CD4-positive, alpha-beta memory T cell (primary cell): ENCODE measurements at regions of chr2 and their contacts with region 1.

Region 1: DNA sequence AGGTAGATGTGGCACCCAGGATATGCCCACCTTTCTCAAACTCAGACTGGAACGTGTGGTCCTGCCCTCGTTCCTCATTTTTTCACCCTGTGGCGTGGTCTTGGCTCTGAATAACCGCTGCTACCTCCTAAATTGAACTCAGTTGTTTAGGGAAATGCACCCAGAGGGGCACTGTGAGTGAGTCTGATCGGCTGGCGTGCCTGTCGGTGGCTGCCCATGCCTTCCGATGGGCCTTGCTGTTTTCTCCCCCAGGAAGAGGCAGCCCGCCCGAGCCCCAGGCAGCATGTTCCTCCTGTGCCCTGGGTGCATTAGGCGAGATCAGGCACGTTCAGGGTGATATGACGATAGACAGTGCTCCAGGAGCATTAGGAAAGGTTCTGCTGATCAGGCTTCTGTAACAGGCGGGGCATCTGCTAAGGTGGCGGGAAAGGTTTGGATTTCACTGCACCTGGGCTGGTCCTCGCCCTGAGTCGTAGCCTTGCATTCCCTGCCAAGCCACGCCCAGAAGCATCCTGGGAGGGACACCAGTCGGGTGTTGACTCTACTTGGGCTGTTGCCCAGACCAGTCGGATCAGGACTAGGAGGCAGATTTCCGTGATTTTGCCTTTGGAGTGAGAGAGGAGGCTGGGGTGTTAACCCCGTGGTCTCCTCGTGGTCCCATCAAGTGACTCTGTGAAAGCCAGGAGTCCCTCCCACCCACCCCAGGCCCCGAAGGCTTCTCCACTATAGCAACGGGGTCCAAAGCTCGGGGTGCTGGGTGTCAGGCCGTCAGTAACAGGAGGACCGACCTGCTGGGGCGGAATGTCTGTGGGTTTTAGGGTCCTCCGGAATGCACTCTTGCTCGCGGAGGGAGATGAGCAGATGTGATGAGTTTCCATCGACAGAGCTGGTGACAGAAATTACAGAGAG is 75.1 kb downstream of the SH3BP4 start:
- DNase-seq: peak in 1 of 5 donors; percentile 15
- H3K4me3 ChIP-seq: no peak overlapping the region
- H3K4me3 Mint-ChIP-seq: no peak overlapping the region
- H3K27ac ChIP-seq: no peak overlapping the region
- H3K27ac Mint-ChIP-seq: no peak overlapping the region
- H3K4me1 ChIP-seq: no peaks in the 10 kb centered on the region
- H3K4me1 Mint-ChIP-seq: no peaks in the 10 kb centered on the region
- H3K27me3 ChIP-seq: no peaks in the 10 kb centered on the region
- H3K27me3 Mint-ChIP-seq: peaks cover 0 to 14% of the 10 kb centered on the region in 2 donors

Region 2: GRCh38 chr2:235051436-235052265 is 24.7 kb after region 1 on chr2:
- CTCF ChIA-PET with region 1: no interaction called
- POLR2A ChIA-PET with region 1: no interaction called
- intact Hi-C with region 1: loop called (anchors 1 kb)
- DNase-seq: no peak
- H3K4me3 ChIP-seq: no peak overlapping the region
- H3K4me3 Mint-ChIP-seq: no peak overlapping the region
- H3K27ac ChIP-seq: no peak overlapping the region
- H3K27ac Mint-ChIP-seq: no peak overlapping the region
- H3K4me1 ChIP-seq: no peaks in the 10 kb centered on the region
- H3K4me1 Mint-ChIP-seq: peaks cover 0 to 2% (median under 1%) of the 10 kb centered on the region in 4 donors
- H3K27me3 ChIP-seq: no peaks in the 10 kb centered on the region
- H3K27me3 Mint-ChIP-seq: peaks cover 2 to 13% of the 10 kb centered on the region in 2 donors